ENCODE measurements at regions of chr1 and their contacts with region 1.

Region 1: GRCh38 chr1:211133836-211134669 is at the start of gene KCNH1:
- DNase-seq: peak; percentile 78
- ATAC-seq: peak; percentile 90
- H3K4me3 ChIP-seq: peak within 1 kb of the TSS in 4 of 5 experiments; percentile 23 to 56 (median 38)
- H3K4me3 Mint-ChIP-seq: peak within 1 kb of the TSS; percentile 76
- H3K27ac ChIP-seq: no peak within 1 kb of the TSS
- H3K27ac Mint-ChIP-seq: no peak within 1 kb of the TSS
- H3K4me1 ChIP-seq: peaks cover 15 to 19% of the 10 kb centered on the region in 2 donors
- H3K4me1 Mint-ChIP-seq: peaks cover 11% of the 10 kb centered on the region
- H3K27me3 ChIP-seq: peaks cover 0 to 34% (median 28%) of the 10 kb centered on the region in 4 experiments
- H3K27me3 Mint-ChIP-seq: peaks cover 72% of the 10 kb centered on the region
- CTCF ChIP-seq: peak; percentile 74
- total RNA-seq, gene KCNH1: not detected in 2 replicates

Region 2: GRCh38 chr1:210407207-210407886 is 726.7 kb before region 1 on chr1:
- CTCF ChIA-PET with region 1: interaction called, 5 read pairs
- POLR2A ChIA-PET with region 1: no interaction called
- intact Hi-C with region 1: loop called (anchors 1 kb)
- DNase-seq: peak; percentile 72
- ATAC-seq: peak; percentile 60
- H3K4me3 ChIP-seq: no peak overlapping the region
- H3K4me3 Mint-ChIP-seq: no peak overlapping the region
- H3K27ac ChIP-seq: no peak overlapping the region
- H3K27ac Mint-ChIP-seq: no peak overlapping the region
- H3K4me1 ChIP-seq: no peaks in the 10 kb centered on the region
- H3K4me1 Mint-ChIP-seq: peaks cover 2% of the 10 kb centered on the region
- H3K27me3 ChIP-seq: no peaks in the 10 kb centered on the region
- H3K27me3 Mint-ChIP-seq: no peaks in the 10 kb centered on the region
- CTCF ChIP-seq: peak; percentile 99

Region 3: DNA sequence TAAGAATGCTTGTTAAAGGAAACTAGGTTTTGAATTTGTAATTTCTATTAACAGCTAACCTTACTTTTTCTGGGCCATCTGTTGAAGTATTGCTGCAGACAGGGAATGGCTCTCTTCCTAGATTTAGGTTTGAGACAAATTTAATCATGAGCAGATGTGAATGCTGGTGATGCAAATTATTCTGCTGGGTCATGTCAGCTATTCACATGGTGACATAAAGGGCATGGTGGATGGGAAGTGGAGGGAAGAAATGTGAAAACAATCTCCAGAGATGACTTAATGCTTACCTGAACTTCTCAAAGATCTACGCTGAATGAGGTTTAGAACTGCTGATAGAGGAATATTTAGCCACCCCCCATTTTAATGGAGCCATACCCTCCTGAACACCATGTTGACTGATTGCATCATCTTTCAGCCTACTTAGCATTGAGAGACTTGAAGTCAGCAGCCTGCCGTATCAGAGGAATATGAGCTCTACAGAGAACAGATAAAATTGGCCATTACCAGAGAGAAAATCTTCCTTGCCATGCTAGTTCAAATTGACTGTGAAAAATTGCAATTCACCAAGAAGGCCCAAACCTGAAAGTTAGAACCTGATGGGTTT is 666.5 kb before region 1 on chr1:
- CTCF ChIA-PET with region 1: no interaction called
- POLR2A ChIA-PET with region 1: no interaction called
- intact Hi-C with region 1: no loop called
- DNase-seq: no peak
- ATAC-seq: no peak
- H3K4me3 ChIP-seq: no peak overlapping the region
- H3K4me3 Mint-ChIP-seq: no peak overlapping the region
- H3K27ac ChIP-seq: no peak overlapping the region
- H3K27ac Mint-ChIP-seq: no peak overlapping the region
- H3K4me1 ChIP-seq: no peaks in the 10 kb centered on the region
- H3K4me1 Mint-ChIP-seq: no peaks in the 10 kb centered on the region
- H3K27me3 ChIP-seq: no peaks in the 10 kb centered on the region
- H3K27me3 Mint-ChIP-seq: no peaks in the 10 kb centered on the region
- CTCF ChIP-seq: no peak

Region 4: GRCh38 chr1:210505601-210506496 is 628.2 kb before region 1 on chr1:
- CTCF ChIA-PET with region 1: no interaction called
- POLR2A ChIA-PET with region 1: no interaction called
- intact Hi-C with region 1: no loop called
- DNase-seq: no peak
- ATAC-seq: no peak
- H3K4me3 ChIP-seq: no peak overlapping the region
- H3K4me3 Mint-ChIP-seq: no peak overlapping the region
- H3K27ac ChIP-seq: no peak overlapping the region
- H3K27ac Mint-ChIP-seq: no peak overlapping the region
- H3K4me1 ChIP-seq: no peaks in the 10 kb centered on the region
- H3K4me1 Mint-ChIP-seq: no peaks in the 10 kb centered on the region
- H3K27me3 ChIP-seq: no peaks in the 10 kb centered on the region
- H3K27me3 Mint-ChIP-seq: no peaks in the 10 kb centered on the region
- CTCF ChIP-seq: no peak

Region 5: DNA sequence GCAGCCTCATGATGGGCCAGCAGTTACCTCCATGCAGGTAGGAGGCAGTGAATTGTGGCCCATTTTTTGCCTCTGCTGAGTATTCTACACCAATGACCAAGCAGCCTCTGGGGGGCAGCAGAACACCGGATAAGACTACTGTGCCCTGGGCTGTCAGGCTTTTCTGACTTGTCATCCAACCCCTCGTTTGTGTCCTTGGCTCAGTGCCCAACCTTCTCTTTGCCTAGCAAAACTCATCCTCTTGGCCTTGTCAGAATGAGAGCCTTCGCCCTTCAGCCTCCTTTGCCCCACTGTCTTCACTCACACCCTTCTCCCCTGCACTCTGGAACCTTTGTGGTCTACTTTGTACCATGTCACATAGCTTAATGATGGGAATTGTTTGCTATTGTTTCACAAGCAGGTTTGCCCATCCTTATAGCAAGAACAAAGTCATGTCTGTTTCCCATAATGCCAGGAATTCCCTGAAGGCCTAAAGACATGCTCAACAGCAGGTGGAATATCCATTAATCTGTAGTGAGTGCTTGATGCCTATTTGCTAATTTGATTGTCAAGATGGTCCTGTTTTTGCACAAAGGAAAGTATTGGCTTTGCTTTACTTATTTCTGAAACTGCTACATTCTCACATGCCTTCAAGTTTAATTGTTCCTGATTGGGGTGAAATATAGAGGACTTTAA is 549.5 kb before region 1 on chr1:
- CTCF ChIA-PET with region 1: no interaction called
- POLR2A ChIA-PET with region 1: no interaction called
- intact Hi-C with region 1: loop called (anchors 2 kb)
- DNase-seq: peak; percentile 56
- ATAC-seq: peak; percentile 43
- H3K4me3 ChIP-seq: no peak overlapping the region
- H3K4me3 Mint-ChIP-seq: no peak overlapping the region
- H3K27ac ChIP-seq: no peak overlapping the region
- H3K27ac Mint-ChIP-seq: no peak overlapping the region
- H3K4me1 ChIP-seq: peaks cover 0 to 6% of the 10 kb centered on the region in 2 donors
- H3K4me1 Mint-ChIP-seq: peaks cover 8% of the 10 kb centered on the region
- H3K27me3 ChIP-seq: no peaks in the 10 kb centered on the region
- H3K27me3 Mint-ChIP-seq: no peaks in the 10 kb centered on the region
- CTCF ChIP-seq: peak; percentile 58

Region 6: GRCh38 chr1:211155040-211155439 is 21.0 kb after region 1 on chr1:
- CTCF ChIA-PET with region 1: no interaction called
- POLR2A ChIA-PET with region 1: no interaction called
- intact Hi-C with region 1: no loop called
- DNase-seq: no peak
- ATAC-seq: no peak
- H3K4me3 ChIP-seq: no peak overlapping the region
- H3K4me3 Mint-ChIP-seq: no peak overlapping the region
- H3K27ac ChIP-seq: no peak overlapping the region
- H3K27ac Mint-ChIP-seq: no peak overlapping the region
- H3K4me1 ChIP-seq: no peaks in the 10 kb centered on the region
- H3K4me1 Mint-ChIP-seq: no peaks in the 10 kb centered on the region
- H3K27me3 ChIP-seq: no peaks in the 10 kb centered on the region
- H3K27me3 Mint-ChIP-seq: peaks cover 24% of the 10 kb centered on the region
- CTCF ChIP-seq: no peak

Region 7: DNA sequence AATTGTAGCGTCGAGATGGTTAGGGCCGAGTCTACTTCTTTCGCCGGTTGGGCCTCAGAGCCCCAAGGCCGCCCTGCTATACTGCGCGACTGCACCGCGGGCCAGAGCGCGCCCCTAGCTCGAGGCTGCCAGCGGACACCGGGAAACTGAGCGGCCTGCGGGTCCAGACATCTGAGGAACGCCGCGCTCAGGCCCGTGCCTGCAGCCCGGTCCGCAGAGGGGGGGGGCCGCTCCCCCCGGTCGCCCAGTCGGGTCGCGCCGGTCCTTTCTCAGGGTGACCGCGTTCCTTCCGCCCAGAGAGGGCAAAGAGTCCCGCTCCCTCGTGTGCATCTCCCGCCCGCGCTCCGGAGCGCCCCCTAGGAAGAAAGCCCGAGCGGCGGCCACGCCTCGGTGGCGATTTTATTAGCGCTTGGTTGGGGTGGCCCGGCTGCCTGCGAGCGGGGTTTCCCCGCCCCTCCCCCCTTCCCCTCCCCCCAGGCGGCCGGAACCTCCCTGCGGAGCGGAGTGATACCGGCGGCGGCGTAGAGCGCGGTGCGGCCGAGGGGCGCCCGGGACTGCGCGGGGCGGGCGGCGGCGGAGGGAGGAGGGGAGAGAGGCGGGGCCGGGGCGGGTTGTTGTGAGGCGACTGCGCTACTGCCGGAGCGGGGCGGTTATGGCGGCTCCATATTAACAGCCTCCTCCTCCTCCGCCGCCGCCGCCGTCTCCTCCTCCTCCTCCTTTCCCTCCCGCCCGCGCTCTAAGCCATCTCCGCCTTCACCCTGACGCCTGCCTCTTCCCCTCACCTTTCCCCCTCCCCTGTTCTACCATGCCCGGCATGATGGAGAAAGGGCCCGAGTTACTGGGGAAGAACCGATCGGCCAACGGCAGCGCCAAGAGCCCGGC is 124.9 kb after region 1 on chr1 and contains the start of gene RCOR3:
- CTCF ChIA-PET with region 1: interaction called, 4 read pairs
- POLR2A ChIA-PET with region 1: no interaction called
- intact Hi-C with region 1: loop called (anchors 2 kb)
- DNase-seq: peak; percentile 93
- ATAC-seq: peak; percentile 74
- H3K4me3 ChIP-seq: peak within 1 kb of the TSS; percentile 81 to 93 (median 90)
- H3K4me3 Mint-ChIP-seq: peak within 1 kb of the TSS; percentile 92
- H3K27ac ChIP-seq: peak within 1 kb of the TSS; percentile 88 to 90
- H3K27ac Mint-ChIP-seq: peak within 1 kb of the TSS; percentile 96
- H3K4me1 ChIP-seq: peaks cover 11 to 16% of the 10 kb centered on the region in 2 donors
- H3K4me1 Mint-ChIP-seq: peaks cover 15% of the 10 kb centered on the region
- H3K27me3 ChIP-seq: no peaks in the 10 kb centered on the region
- H3K27me3 Mint-ChIP-seq: no peaks in the 10 kb centered on the region
- CTCF ChIP-seq: peak; percentile 84
- total RNA-seq, gene RCOR3: 120 and 124 TPM in 2 replicates